Activated CD4-positive, alpha-beta T cell treated with anti-CD3 and anti-CD28 coated beads for 36 hours (primary cell): ENCODE measurements at regions of chr14 and their contacts with region 1.

Region 1: DNA sequence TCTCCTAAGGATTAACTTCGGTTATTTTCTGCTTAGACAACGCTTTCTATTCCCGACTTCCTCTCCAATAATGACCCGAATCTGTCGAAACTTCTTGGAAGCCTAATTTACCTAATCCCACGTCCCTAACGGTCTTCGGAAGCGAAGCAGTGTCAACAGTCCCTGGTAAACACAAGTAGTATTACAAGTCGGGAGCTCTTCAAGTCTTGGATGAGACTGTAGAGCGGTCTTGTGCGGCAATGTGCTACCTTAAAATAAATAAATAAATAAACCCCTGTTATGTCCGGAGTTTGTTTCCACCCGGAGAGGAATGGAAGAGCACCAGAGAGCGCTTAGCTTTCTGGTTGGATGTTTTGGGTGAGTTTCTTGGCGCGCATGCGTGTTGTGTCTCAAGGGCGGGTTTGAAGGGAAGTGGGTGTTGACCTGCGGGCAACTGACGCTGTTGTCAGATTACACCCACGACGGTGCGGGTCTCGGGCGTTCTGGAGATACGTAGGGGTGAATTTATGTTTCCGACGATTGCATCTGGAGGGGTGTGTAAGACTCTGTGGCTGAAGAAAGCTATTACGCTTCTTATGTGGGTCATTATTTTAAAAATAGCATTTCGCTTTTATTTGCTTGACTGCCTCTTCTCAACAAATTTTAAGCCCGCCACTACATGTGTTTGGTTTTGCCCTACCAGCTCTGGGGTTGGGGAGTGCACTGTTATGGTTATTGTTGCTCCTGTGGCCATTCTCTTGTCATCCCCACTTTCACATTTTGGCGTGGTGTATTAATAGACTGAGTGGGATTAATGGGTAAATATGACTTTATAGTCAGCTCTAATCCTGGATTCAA is at the starts of genes KIAA0586 and TIMM9:
- DNase-seq: peak; percentile 98
- ATAC-seq: peak; percentile 77
- H3K4me3 Mint-ChIP-seq: peak within 1 kb of the TSS; percentile 97
- H3K27ac Mint-ChIP-seq: peak within 1 kb of the TSS; percentile 99
- H3K4me1 Mint-ChIP-seq: peaks cover 45% of the 10 kb centered on the region
- H3K27me3 Mint-ChIP-seq: no peaks in the 10 kb centered on the region
- total RNA-seq, gene KIAA0586: 32.0 to 38.4 TPM
- total RNA-seq, gene TIMM9: 72.6 to 109 TPM

Region 2: DNA sequence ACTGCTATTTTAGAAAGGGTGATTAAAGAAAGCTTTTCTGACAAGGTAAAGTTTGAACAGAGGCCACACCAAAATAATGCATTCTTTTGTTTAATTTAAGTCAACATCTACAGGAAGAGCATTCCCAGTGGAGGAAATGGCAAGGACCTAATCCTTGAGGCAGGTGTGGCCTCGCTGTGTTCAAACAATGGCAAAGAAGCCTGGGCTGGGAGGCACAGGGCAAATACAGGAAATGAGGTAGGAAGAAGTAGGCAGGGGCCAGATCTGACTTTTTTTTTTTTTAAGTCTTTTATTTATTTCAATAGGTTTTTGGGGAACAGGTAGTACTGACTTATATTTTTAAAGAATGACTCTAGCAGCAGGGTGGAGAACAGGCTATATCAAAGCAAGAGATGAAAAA is 329.0 kb before region 1 on chr14:
- CTCF ChIA-PET with region 1: no interaction called
- POLR2A ChIA-PET with region 1: no interaction called
- intact Hi-C with region 1: no loop called
- DNase-seq: no peak
- ATAC-seq: no peak
- H3K4me3 Mint-ChIP-seq: no peak overlapping the region
- H3K27ac Mint-ChIP-seq: no peak overlapping the region
- H3K4me1 Mint-ChIP-seq: no peaks in the 10 kb centered on the region
- H3K27me3 Mint-ChIP-seq: peaks cover 3% of the 10 kb centered on the region

Region 3: GRCh38 chr14:58199726-58200479 is 227.6 kb before region 1 on chr14 and contains the start of gene ACTR10:
- CTCF ChIA-PET with region 1: no interaction called
- POLR2A ChIA-PET with region 1: no interaction called
- intact Hi-C with region 1: loop called (anchors 1 to 5 kb)
- DNase-seq: peak; percentile 93
- ATAC-seq: peak; percentile 93
- H3K4me3 Mint-ChIP-seq: peak within 1 kb of the TSS; percentile 97
- H3K27ac Mint-ChIP-seq: peak within 1 kb of the TSS; percentile 92
- H3K4me1 Mint-ChIP-seq: peaks cover 38% of the 10 kb centered on the region
- H3K27me3 Mint-ChIP-seq: no peaks in the 10 kb centered on the region
- total RNA-seq, gene ACTR10: 31.2 to 32.3 TPM

Region 4: GRCh38 chr14:58297762-58298476 is 129.6 kb before region 1 on chr14:
- CTCF ChIA-PET with region 1: interaction called, 4 read pairs
- POLR2A ChIA-PET with region 1: interaction called, 26 read pairs
- intact Hi-C with region 1: loop called (anchors 1 kb)
- DNase-seq: peak; percentile 99
- ATAC-seq: peak; percentile 89
- H3K4me3 Mint-ChIP-seq: no peak overlapping the region
- H3K27ac Mint-ChIP-seq: no peak overlapping the region
- H3K4me1 Mint-ChIP-seq: peaks cover 38% of the 10 kb centered on the region
- H3K27me3 Mint-ChIP-seq: no peaks in the 10 kb centered on the region

Region 5: GRCh38 chr14:58395812-58396788 is 31.4 kb before region 1 on chr14 and contains the start of gene TOMM20L:
- CTCF ChIA-PET with region 1: interaction called, 10 read pairs
- POLR2A ChIA-PET with region 1: no interaction called
- intact Hi-C with region 1: loop called in 1 of 2 experiments (anchors 2 kb)
- DNase-seq: peak; percentile 82
- ATAC-seq: peak; percentile 92
- H3K4me3 Mint-ChIP-seq: peak within 1 kb of the TSS; percentile 60
- H3K27ac Mint-ChIP-seq: peak within 1 kb of the TSS; percentile 70
- H3K4me1 Mint-ChIP-seq: peaks cover 12% of the 10 kb centered on the region
- H3K27me3 Mint-ChIP-seq: no peaks in the 10 kb centered on the region
- total RNA-seq, gene TOMM20L: not detected

Region 6: GRCh38 chr14:58637391-58638230 is 210.1 kb after region 1 on chr14 and contains the start of gene DACT1:
- CTCF ChIA-PET with region 1: no interaction called
- POLR2A ChIA-PET with region 1: no interaction called
- intact Hi-C with region 1: loop called in 1 of 2 experiments (anchors 2 kb)
- DNase-seq: peak; percentile 80
- ATAC-seq: peak; percentile 69
- H3K4me3 Mint-ChIP-seq: peak within 1 kb of the TSS; percentile 76
- H3K27ac Mint-ChIP-seq: peak within 1 kb of the TSS; percentile 85
- H3K4me1 Mint-ChIP-seq: peaks cover 41% of the 10 kb centered on the region
- H3K27me3 Mint-ChIP-seq: peaks cover 12% of the 10 kb centered on the region
- total RNA-seq, gene DACT1: 8.8 to 8.9 TPM

Region 7: GRCh38 chr14:60248697-60249318 is 1821.3 kb after region 1 on chr14 and contains the start of gene PPM1A:
- CTCF ChIA-PET with region 1: no interaction called
- POLR2A ChIA-PET with region 1: no interaction called
- intact Hi-C with region 1: loop called in 1 of 2 experiments (anchors 2 kb)
- DNase-seq: peak; percentile 97
- ATAC-seq: peak; percentile 73
- H3K4me3 Mint-ChIP-seq: peak within 1 kb of the TSS; percentile 94
- H3K27ac Mint-ChIP-seq: peak within 1 kb of the TSS; percentile 100
- H3K4me1 Mint-ChIP-seq: peaks cover 50% of the 10 kb centered on the region
- H3K27me3 Mint-ChIP-seq: no peaks in the 10 kb centered on the region
- total RNA-seq, gene PPM1A: 30.4 to 41.5 TPM